ENCODE measurements at regions of chr9 and their contacts with region 1.

Region 1: DNA sequence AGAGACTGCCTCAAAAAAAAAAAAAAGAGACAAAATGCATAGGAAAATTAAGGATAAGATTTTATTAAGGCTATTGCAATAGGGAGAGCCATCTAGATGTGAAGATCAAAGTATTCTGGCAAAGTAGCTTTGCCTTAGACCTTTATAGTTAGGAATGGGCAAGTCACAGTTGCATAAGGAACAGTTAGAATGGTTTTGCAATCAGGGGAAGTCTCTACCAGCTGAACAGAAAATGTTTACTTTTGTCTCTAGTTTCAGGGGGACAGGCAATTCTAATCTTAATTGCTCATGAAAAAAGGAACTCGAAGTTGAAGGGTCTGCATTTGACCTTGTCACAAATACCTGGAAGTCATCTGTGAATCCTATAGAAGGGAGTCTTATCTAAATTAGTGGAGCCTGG is 13.1 kb upstream of the ATP6V1G1 start:
- DNase-seq: no peak
- ATAC-seq: no peak
- H3K4me3 ChIP-seq: no peak overlapping the region
- H3K27ac ChIP-seq: no peak overlapping the region
- H3K4me1 ChIP-seq: no peaks in the 10 kb centered on the region
- H3K27me3 ChIP-seq: no peaks in the 10 kb centered on the region
- CTCF ChIP-seq: no peak

Region 2: GRCh38 chr9:114538241-114538640 is 36.2 kb before region 1 on chr9:
- CTCF ChIA-PET with region 1: interaction called, 14 read pairs
- POLR2A ChIA-PET with region 1: no interaction called
- in situ Hi-C with region 1: no loop called
- intact Hi-C with region 1: no loop called
- DNase-seq: no peak
- ATAC-seq: peak; percentile 79; the same call in 1 of the 2 replicates
- H3K4me3 ChIP-seq: no peak overlapping the region
- H3K27ac ChIP-seq: no peak overlapping the region
- H3K4me1 ChIP-seq: no peaks in the 10 kb centered on the region
- H3K27me3 ChIP-seq: no peaks in the 10 kb centered on the region
- CTCF ChIP-seq: peak; percentile 32

Region 3: DNA sequence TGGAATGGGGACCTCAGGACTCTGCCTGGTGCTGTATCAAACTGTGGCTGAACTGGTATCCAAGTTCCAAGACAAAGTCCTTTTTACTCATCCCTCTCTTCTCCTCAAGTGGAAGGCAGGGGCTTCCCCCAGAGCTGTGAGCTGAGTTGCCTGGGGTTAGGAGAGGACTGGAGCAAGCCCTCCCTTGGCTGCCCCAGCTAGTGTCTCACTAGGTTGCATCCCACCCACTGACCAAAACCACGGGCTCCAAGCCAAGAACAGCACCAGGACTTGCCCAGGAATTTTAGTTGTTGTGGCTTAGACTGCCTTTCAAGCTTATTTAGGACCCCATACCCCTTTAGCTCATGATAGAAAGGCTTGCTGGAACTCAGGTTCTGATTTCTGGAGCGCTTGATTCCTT is 702.2 kb after region 1 on chr9:
- CTCF ChIA-PET with region 1: no interaction called
- POLR2A ChIA-PET with region 1: interaction called, 12 read pairs
- in situ Hi-C with region 1: no loop called
- intact Hi-C with region 1: no loop called
- DNase-seq: no peak
- ATAC-seq: no peak
- H3K4me3 ChIP-seq: no peak overlapping the region
- H3K27ac ChIP-seq: no peak overlapping the region
- H3K4me1 ChIP-seq: no peaks in the 10 kb centered on the region
- H3K27me3 ChIP-seq: no peaks in the 10 kb centered on the region
- CTCF ChIP-seq: no peak

Measured in Panc1 (cell line).